GM13976 (cell line): ENCODE measurements at regions of chrX and their contacts with region 1.

Region 1: GRCh38 chrX:68511255-68511654 is 12.4 kb downstream of the YIPF6 start:
- DNase-seq: peak; percentile 59
- CTCF ChIP-seq: peak; percentile 76

Region 2: DNA sequence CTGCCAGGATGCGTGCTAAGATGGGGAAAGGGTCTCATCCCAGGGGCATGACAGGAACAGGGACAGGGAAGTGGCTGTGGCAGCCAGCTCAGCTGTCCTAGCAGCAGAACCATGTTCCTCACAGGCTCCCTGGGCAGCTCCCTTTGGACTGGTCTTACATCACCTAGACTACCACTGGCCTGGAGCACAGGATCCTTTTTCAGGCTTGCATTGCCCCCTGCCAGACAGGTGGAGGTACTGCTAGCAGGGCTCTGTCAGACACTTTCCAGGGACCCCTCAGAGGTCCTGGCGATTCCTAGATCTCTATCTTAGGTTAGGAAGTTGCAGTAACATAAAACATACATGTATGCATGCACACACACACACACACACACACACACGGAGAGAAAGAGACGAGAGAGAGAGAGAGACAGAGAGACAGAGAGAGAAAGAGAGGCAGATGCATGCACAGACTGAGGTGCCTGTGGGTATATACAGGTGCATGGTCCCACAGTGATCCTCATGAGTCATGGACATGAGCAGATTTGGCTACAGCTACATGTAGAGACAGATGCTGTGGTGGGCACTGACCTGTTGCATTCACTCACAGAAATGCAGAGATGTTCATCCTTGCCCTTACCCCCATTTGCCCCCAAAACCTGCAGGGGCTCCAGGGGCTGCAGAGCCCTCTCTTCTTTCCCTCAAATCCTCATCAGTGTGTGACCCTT is 199.8 kb after region 1 on chrX:
- in situ Hi-C with region 1: loop called (anchors 25 kb)
- DNase-seq: peak; percentile 55
- CTCF ChIP-seq: peak; percentile 47

Region 3: GRCh38 chrX:69060631-69061408 is 549.6 kb after region 1 on chrX:
- in situ Hi-C with region 1: no loop called
- DNase-seq: no peak
- CTCF ChIP-seq: no peak